Heart right ventricle (tissue), 16 donors: ENCODE measurements at regions of chr10 and their contacts with region 1.

Region 1: GRCh38 chr10:22714479-22715289 is at the start of gene PIP4K2A:
- DNase-seq: peak; percentile 71 to 83
- ATAC-seq: peak; percentile 74 to 94 (median 86)
- H3K4me3 ChIP-seq: peak within 1 kb of the TSS; percentile 80 to 99 (median 94)
- H3K27ac ChIP-seq: peak within 1 kb of the TSS; percentile 77 to 95 (median 84)
- H3K4me1 ChIP-seq: peaks cover 0 to 37% (median 25%) of the 10 kb centered on the region in 9 donors
- H3K27me3 ChIP-seq: no peaks in the 10 kb centered on the region
- CTCF ChIP-seq: peak in 1 of 9 donors; percentile 7
- total RNA-seq, gene PIP4K2A: 8.8 to 29.1 (median 14.3) TPM

Region 2: DNA sequence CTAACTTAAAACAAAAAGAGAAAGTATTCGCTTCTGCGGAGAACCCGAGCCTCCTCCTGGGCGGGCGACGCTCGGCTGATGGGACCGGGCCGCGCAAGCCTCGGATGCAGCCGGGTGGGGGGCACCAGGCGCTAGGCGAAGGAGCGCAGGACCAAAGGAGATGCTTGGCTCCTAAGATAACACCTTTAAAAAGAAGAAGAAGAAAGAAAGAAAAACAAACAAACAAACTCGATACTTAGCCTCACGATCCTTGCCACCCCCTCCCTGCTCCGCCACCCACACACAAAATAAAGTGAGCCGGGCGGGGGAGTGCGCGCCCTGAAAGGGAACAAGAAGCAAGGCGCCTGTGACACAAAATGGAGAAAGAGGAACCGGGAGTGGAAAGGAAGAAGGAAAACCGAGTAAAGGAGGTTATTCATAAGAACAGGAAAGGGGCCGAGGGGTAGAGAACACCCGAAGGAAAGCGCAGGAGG is 462.9 kb before region 1 on chr10:
- intact Hi-C with region 1: loop called in 2 of 10 experiments (anchors 10 kb)
- DNase-seq: peak; percentile 64 to 79
- ATAC-seq: peak; percentile 54 to 82 (median 68)
- H3K4me3 ChIP-seq: peak overlapping the region; percentile 43 to 85 (median 76)
- H3K27ac ChIP-seq: peak overlapping the region; percentile 96 to 99 (median 98)
- H3K4me1 ChIP-seq: peaks cover 0 to 37% (median 12%) of the 10 kb centered on the region in 9 donors
- H3K27me3 ChIP-seq: peaks cover 0 to 13% (median 0%) of the 10 kb centered on the region in 7 donors
- CTCF ChIP-seq: no peak

Region 3: GRCh38 chr10:22340362-22341189 is 374.1 kb before region 1 on chr10:
- intact Hi-C with region 1: loop called in 2 of 10 experiments (anchors 10 kb)
- DNase-seq: peak; percentile 66 to 72
- ATAC-seq: peak; percentile 84 to 92 (median 87)
- H3K4me3 ChIP-seq: peak overlapping the region; percentile 70 to 90 (median 82)
- H3K27ac ChIP-seq: peak overlapping the region; percentile 81 to 97 (median 95)
- H3K4me1 ChIP-seq: peaks cover 0 to 41% (median 25%) of the 10 kb centered on the region in 9 donors
- H3K27me3 ChIP-seq: peaks cover 24 to 94% (median 87%) of the 10 kb centered on the region in 7 donors
- CTCF ChIP-seq: peak in 1 of 9 donors; percentile 5

Region 4: DNA sequence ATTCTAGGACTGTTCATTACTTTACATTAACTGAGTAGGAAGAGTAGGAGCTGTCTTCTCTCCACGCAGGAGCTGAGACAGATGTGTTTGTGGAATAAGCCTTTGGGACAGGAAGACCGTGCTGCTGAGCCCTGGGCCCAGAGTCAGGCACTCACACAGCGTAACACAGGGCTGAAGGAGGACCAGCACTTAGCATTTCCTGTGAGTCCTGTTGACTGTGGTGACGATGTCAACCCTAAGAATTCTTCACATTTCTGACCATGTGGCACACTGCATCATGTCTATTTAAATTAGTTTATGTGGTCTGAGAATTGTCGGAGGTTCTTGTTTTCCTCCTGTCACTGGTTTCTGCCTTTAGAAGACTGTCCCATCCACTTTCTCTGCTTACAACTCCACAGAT is 117.5 kb before region 1 on chr10:
- intact Hi-C with region 1: loop called in 3 of 10 experiments (anchors 10 kb)
- DNase-seq: no peak
- ATAC-seq: peak in 3 of 8 donors; percentile 20 to 53 (median 27)
- H3K4me3 ChIP-seq: no peak overlapping the region
- H3K27ac ChIP-seq: peak overlapping the region in 1 of 10 donors; percentile 52
- H3K4me1 ChIP-seq: peaks cover 0 to 51% (median 0%) of the 10 kb centered on the region in 9 donors
- H3K27me3 ChIP-seq: no peaks in the 10 kb centered on the region
- CTCF ChIP-seq: no peak

Region 5: DNA sequence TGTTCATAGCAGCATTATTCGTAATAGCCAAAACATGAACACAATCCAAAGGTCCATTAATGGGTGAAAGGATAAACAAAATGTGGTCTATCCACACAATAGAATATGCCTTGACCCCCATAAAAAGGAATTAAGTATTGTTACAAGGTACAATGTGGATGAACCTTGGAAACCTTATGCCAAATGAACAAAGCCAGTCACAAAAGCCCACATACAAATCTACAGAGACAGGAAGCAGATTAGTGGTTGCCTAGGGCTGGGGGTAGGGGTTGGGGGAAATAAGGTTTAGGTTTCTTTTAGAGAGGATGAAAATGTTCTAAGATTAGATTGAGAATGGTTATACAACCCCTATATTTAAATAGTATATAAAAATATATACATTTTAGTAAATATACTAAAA is 35.1 kb before region 1 on chr10:
- intact Hi-C with region 1: loop called in 1 of 10 experiments (anchors 5 kb)
- DNase-seq: no peak
- ATAC-seq: no peak
- H3K4me3 ChIP-seq: no peak overlapping the region
- H3K27ac ChIP-seq: no peak overlapping the region
- H3K4me1 ChIP-seq: peaks cover 0 to 77% (median 16%) of the 10 kb centered on the region in 9 donors
- H3K27me3 ChIP-seq: no peaks in the 10 kb centered on the region
- CTCF ChIP-seq: no peak

Region 6: GRCh38 chr10:22831586-22831985 is 116.9 kb after region 1 on chr10:
- intact Hi-C with region 1: loop called in 1 of 10 experiments (anchors 10 kb)
- DNase-seq: no peak
- ATAC-seq: no peak
- H3K4me3 ChIP-seq: no peak overlapping the region
- H3K27ac ChIP-seq: no peak overlapping the region
- H3K4me1 ChIP-seq: no peaks in the 10 kb centered on the region
- H3K27me3 ChIP-seq: no peaks in the 10 kb centered on the region
- CTCF ChIP-seq: no peak

Region 7: GRCh38 chr10:22854935-22855421 is 140.3 kb after region 1 on chr10:
- intact Hi-C with region 1: loop called in 1 of 10 experiments (anchors 10 kb)
- DNase-seq: peak in 1 of 2 donors; percentile 6
- ATAC-seq: peak in 7 of 8 donors; percentile 46 to 98 (median 93)
- H3K4me3 ChIP-seq: no peak overlapping the region
- H3K27ac ChIP-seq: peak overlapping the region in 7 of 10 donors; percentile 25 to 76 (median 68)
- H3K4me1 ChIP-seq: peaks cover 0 to 25% (median 16%) of the 10 kb centered on the region in 9 donors
- H3K27me3 ChIP-seq: no peaks in the 10 kb centered on the region
- CTCF ChIP-seq: peak in 5 of 9 donors; percentile 24 to 47 (median 39)